Calu3 (cell line): ENCODE measurements at regions of chr12 and their contacts with region 1.

Region 1: GRCh38 chr12:24109381-24110039 is 160.0 kb upstream of the SOX5 start:
- DNase-seq: no peak
- H3K4me3 Mint-ChIP-seq: no peak overlapping the region
- H3K27ac Mint-ChIP-seq: no peak overlapping the region
- H3K4me1 Mint-ChIP-seq: no peaks in the 10 kb centered on the region
- H3K27me3 Mint-ChIP-seq: no peaks in the 10 kb centered on the region
- CTCF ChIP-seq: peak; percentile 24

Region 2: GRCh38 chr12:24278832-24279231 is 169.3 kb after region 1 on chr12:
- CTCF ChIA-PET with region 1: interaction called, 7 read pairs
- intact Hi-C with region 1: loop called (anchors 10 kb)
- DNase-seq: no peak
- H3K4me3 Mint-ChIP-seq: no peak overlapping the region
- H3K27ac Mint-ChIP-seq: no peak overlapping the region
- H3K4me1 Mint-ChIP-seq: no peaks in the 10 kb centered on the region
- H3K27me3 Mint-ChIP-seq: no peaks in the 10 kb centered on the region
- CTCF ChIP-seq: no peak

Region 3: GRCh38 chr12:24838531-24838950 is 729.0 kb after region 1 on chr12:
- CTCF ChIA-PET with region 1: no interaction called
- intact Hi-C with region 1: loop called (anchors 10 kb)
- DNase-seq: no peak
- H3K4me3 Mint-ChIP-seq: no peak overlapping the region
- H3K27ac Mint-ChIP-seq: no peak overlapping the region
- H3K4me1 Mint-ChIP-seq: no peaks in the 10 kb centered on the region
- H3K27me3 Mint-ChIP-seq: no peaks in the 10 kb centered on the region
- CTCF ChIP-seq: no peak